GM12878 (cell line): ENCODE measurements at regions of chr16 and their contacts with region 1.

Region 1: DNA sequence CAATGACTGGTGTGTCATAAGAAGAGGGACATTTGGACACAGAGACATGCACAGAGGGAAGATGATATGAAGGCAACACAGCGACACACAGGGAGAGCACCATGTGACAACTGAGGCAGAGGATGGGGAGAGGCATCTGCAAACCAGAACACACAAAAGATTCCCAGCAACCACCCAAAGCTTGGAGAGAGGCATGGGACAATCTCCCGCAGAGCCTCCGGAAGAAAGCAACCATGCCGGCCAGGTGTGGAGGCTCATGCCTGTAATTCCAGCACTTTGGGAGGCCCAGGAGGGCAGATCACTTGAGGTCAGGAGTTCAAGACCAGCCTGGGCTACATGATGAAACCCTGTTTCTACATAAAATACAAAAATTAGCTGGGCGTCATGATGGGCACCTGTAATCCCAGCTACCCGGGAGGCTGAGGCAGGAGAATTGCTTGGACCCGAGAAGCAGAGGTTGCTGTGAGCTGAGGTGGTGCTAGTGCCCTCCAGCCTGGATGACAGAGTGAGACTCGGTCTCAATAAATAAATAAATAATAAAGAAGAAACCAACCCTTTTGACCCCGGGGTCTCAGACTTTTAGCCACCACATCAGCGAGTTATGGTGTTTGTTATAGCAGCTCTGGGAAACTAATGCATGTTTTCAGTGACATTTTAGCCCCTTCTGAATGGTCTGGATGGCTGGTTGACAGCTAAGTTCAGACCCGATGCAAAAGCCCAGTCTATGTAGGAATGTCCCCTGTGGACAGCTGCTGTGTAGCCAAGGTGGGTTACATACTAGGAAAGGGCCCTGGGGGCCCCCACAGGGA is 13.8 kb upstream of the PLCG2 start:
- DNase-seq: no peak
- ATAC-seq: no peak
- H3K4me3 ChIP-seq: no peak overlapping the region
- H3K27ac ChIP-seq: no peak overlapping the region
- H3K4me1 ChIP-seq: peaks cover 7% of the 10 kb centered on the region
- H3K27me3 ChIP-seq: no peaks in the 10 kb centered on the region
- CTCF ChIP-seq: no peak
- EP300 ChIP-seq: no peak
- POLR2A ChIP-seq: no peak
- RAD21 ChIP-seq: no peak

Region 2: GRCh38 chr16:81477697-81478693 is 287.3 kb before region 1 on chr16:
- CTCF ChIA-PET with region 1: no interaction called
- POLR2A ChIA-PET with region 1: no interaction called
- RAD21 ChIA-PET with region 1: no interaction called
- SMC1A ChIA-PET with region 1: no interaction called
- in situ Hi-C with region 1: no loop called
- intact Hi-C with region 1: no loop called
- DNase-seq: no peak
- ATAC-seq: peak; percentile 7; the same call in 1 of the 3 replicates
- H3K4me3 ChIP-seq: peak overlapping the region; percentile 5; the same call in 1 of the 2 replicates
- H3K27ac ChIP-seq: peak overlapping the region; percentile 92
- H3K4me1 ChIP-seq: peaks cover 60% of the 10 kb centered on the region
- H3K27me3 ChIP-seq: no peaks in the 10 kb centered on the region
- CTCF ChIP-seq: peak in 1 of 3 experiments; percentile 9; a peak in 1 of 6 replicates
- EP300 ChIP-seq: no peak
- POLR2A ChIP-seq: no peak; the same call in 1 of the 2 replicates
- RAD21 ChIP-seq: peak; percentile 18; the same call in 1 of the 2 replicates

Region 3: DNA sequence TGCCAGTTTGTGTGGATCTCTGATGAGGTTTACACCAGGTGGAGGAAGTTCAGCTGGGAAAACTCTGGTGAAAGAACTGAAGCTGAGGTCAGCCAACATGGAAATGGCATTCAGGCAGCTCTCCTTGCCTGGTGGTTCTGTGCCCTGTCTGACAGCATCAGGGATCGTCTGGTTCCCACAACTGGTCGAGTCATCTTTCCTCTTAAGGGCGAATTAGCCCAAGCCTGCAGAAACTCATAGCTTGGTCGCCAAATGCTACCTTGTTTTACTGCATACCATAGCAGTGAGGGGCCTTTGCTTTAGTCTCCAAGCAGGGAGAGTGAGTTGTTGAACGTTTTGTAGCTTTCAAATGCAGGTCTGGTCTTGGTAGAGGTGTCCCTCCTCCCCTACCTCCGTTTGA is 21.0 kb after region 1 on chr16:
- CTCF ChIA-PET with region 1: no interaction called
- POLR2A ChIA-PET with region 1: interaction called, 7 read pairs
- RAD21 ChIA-PET with region 1: interaction called, 3 read pairs
- SMC1A ChIA-PET with region 1: interaction called, 10 read pairs
- in situ Hi-C with region 1: no loop called
- intact Hi-C with region 1: no loop called
- DNase-seq: no peak
- ATAC-seq: no peak
- H3K4me3 ChIP-seq: peak overlapping the region; percentile 75
- H3K27ac ChIP-seq: peak overlapping the region; percentile 60
- H3K4me1 ChIP-seq: peaks cover 42% of the 10 kb centered on the region
- H3K27me3 ChIP-seq: no peaks in the 10 kb centered on the region
- CTCF ChIP-seq: no peak
- EP300 ChIP-seq: no peak
- POLR2A ChIP-seq: no peak
- RAD21 ChIP-seq: no peak